AG04449 (cell line): ENCODE measurements at regions of chr3 and their contacts with region 1.

Region 1: GRCh38 chr3:17412950-17413530 is 329.4 kb downstream of the TBC1D5 start:
- DNase-seq: no peak
- H3K4me3 ChIP-seq: no peak overlapping the region
- CTCF ChIP-seq: peak; percentile 65

Region 2: DNA sequence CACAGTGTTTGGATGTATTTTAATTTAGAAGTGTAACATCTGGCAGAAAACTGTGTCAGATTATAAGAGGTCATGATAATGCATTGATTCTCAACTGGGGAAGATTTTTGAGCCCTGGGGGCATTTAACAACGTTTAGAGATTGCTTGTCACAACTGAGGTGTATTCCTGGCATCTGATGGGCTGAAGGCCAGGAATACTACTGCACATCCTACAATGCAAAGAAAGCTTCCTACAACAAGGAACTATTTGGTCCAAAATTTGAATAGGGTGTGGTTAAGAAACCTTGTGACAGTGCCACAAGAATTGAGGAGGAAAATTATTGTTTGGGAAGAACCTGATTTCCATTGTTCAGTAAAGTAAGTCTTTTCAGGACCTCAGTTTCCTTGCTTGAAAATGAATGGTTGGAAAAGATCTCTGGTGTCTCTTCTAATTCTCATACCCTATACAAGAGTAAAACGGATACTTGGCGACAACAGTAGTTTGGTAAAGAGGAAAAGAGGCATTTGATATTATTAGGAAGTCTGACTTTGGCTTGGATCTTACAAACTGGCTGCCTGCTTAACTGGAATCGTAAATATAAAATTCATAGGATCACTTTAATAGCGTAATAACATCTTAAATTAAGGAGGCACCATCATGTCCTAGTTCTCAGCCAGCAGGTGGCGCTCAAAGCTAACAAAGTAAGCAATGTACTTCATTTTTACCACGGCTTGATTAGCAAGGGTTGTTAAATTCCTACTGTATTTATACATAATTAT is 812.1 kb before region 1 on chr3:
- CTCF ChIA-PET with region 1: interaction called, 17 read pairs
- POLR2A ChIA-PET with region 1: no interaction called
- DNase-seq: peak; percentile 53
- H3K4me3 ChIP-seq: no peak overlapping the region
- CTCF ChIP-seq: peak; percentile 63

Region 3: GRCh38 chr3:17190353-17191078 is 222.5 kb before region 1 on chr3:
- CTCF ChIA-PET with region 1: no interaction called
- POLR2A ChIA-PET with region 1: no interaction called
- DNase-seq: no peak
- H3K4me3 ChIP-seq: no peak overlapping the region
- CTCF ChIP-seq: no peak

Region 4: DNA sequence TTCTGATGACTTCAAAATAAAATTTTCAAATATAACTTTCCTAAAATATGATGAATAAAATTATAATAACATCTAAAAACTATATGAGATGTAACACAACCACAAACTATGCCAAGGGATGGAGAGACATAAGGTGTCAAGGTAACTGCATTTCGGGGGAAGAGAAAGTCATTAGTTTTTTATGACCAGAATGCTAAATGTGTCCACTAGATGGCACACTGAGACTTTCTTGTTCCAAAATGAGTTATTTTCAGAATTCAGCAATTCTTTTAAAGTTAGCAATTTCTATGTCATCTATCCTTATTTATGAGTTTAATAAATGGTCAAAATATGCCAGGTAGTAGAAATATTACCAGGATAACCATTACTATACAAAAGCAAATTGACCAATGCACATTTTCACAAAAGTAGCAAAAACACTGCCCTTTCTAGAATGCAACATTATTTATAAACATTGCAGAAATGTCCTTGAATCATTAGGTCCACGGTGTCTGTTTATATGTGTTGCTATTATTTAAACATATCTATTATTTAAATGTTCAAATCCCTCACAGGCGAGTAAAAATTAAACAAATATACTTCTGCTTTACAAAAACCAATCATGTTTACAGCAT is 154.1 kb before region 1 on chr3:
- CTCF ChIA-PET with region 1: interaction called, 41 read pairs
- POLR2A ChIA-PET with region 1: no interaction called
- DNase-seq: peak; percentile 7
- H3K4me3 ChIP-seq: no peak overlapping the region
- CTCF ChIP-seq: peak; percentile 57

Region 5: DNA sequence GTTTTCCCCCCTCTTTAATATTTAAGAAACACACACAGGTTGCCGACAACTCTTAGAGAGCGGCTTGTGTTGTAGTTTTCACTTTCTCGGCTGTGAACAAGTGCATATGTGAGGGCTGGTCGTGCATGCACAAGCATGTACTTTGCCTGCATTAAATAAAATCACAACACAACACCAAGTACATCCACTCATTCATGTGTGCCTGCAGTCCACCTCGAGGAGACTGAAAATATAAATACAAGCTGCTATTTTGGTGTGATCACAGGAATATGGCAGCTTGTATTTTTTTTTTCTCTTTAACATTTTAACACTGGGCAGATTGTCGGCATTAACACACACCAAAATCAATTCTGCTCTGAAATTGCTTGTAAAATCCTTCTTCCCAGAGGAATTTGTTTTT is 17.0 kb before region 1 on chr3:
- CTCF ChIA-PET with region 1: interaction called, 11 read pairs
- POLR2A ChIA-PET with region 1: no interaction called
- DNase-seq: no peak
- H3K4me3 ChIP-seq: no peak overlapping the region
- CTCF ChIP-seq: no peak

Region 6: GRCh38 chr3:17423786-17424536 is 10.9 kb after region 1 on chr3:
- CTCF ChIA-PET with region 1: interaction called, 57 read pairs
- POLR2A ChIA-PET with region 1: no interaction called
- DNase-seq: no peak
- H3K4me3 ChIP-seq: no peak overlapping the region
- CTCF ChIP-seq: no peak

Region 7: DNA sequence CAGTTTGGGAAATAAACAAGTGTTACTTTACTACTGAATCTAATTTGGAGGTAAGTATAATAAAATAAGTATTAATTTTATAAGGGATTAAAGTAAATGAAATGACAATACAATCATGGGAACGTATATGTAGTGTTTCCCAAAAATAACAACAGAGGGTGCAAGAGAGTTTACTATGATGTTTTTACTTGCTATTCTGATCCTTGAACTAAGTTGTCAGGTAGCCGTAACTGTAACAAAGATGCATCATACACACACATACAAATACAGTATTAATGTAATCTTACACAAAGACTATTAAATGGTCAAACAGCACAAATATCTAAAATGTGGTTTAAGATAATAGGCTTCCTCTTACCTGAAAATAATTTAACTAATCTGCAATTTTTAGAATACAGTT is 18.0 kb after region 1 on chr3:
- CTCF ChIA-PET with region 1: interaction called, 57 read pairs
- POLR2A ChIA-PET with region 1: no interaction called
- DNase-seq: no peak
- H3K4me3 ChIP-seq: no peak overlapping the region
- CTCF ChIP-seq: peak; percentile 33

Region 8: GRCh38 chr3:17456046-17456445 is 43.0 kb after region 1 on chr3:
- CTCF ChIA-PET with region 1: no interaction called
- POLR2A ChIA-PET with region 1: no interaction called
- DNase-seq: no peak
- H3K4me3 ChIP-seq: no peak overlapping the region
- CTCF ChIP-seq: no peak